WTC11 (cell line): ENCODE measurements at regions of chrX and their contacts with region 1.

Region 1: GRCh38 chrX:154370882-154371770 is 3.3 kb downstream of the FLNA start:
- DNase-seq: peak; percentile 89
- ATAC-seq: peak; percentile 40
- H3K4me3 Mint-ChIP-seq: peak overlapping the region; percentile 75
- H3K27ac Mint-ChIP-seq: 0 out of 2 replicates have a peak overlapping the region, but pooled peaks have one; percentile 45
- H3K4me1 Mint-ChIP-seq: peaks cover 11% of the 10 kb centered on the region
- H3K27me3 Mint-ChIP-seq: peaks cover 6% of the 10 kb centered on the region
- CTCF ChIP-seq: no peak

Region 2: DNA sequence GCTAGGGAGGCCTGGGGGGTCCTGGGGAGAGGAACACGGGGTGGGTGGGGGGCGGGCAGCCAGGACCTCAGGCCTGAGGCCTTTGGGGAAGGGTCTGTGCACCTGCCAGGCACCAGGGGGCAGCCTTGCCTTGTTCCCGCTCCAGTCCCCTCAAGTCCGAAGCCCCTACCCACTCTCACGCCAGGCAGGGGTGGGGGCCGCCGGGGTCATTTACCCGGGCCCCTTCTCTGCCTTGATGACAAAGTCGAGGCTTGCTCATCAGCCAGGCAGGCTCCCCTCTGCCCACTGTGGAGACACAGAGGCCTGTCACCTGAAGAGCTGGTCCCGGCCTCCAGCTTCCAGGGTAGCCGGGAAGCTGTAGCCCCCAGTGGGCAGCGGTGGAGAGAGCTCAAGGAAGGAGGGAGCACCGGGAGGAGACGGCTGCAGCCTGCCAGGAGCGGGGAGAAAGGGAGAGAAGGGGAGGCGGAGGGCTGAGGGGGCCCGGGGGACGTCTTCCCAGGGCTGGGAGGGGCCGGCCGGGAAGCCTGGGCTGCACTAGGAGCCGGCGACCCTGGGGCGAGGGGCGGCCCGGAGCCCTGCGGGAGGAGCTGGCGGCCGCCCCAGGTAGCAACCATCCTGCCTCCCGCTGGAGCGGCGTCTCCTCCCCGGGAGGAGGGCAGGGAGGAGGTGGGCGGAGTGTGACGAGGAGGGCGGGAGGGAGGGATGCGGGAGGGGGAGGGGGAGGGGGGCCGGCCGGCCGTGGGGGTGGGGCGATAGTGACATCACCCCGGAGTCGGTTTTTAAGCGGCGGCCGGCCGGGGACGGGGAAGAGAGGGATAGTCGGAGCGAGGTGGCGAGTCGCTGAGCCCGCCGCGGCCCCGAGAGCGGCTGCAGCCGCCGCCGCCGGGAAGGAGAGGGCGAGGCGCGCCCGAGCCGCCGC is 683.7 kb before region 1 on chrX and contains the start of gene SLC6A8:
- CTCF ChIA-PET with region 1: no interaction called
- POLR2A ChIA-PET with region 1: no interaction called
- DNase-seq: peak; percentile 65
- ATAC-seq: peak; percentile 38
- H3K4me3 Mint-ChIP-seq: peak within 1 kb of the TSS; percentile 61
- H3K27ac Mint-ChIP-seq: peak within 1 kb of the TSS; percentile 85
- H3K4me1 Mint-ChIP-seq: peaks cover 18% of the 10 kb centered on the region
- H3K27me3 Mint-ChIP-seq: no peaks in the 10 kb centered on the region; the same call in 1 of the 2 replicates
- CTCF ChIP-seq: peak; percentile 31; the same call in 1 of the 2 replicates
- total RNA-seq, gene SLC6A8: 102 to 112 TPM (median 110 TPM) in 3 replicates

Region 3: DNA sequence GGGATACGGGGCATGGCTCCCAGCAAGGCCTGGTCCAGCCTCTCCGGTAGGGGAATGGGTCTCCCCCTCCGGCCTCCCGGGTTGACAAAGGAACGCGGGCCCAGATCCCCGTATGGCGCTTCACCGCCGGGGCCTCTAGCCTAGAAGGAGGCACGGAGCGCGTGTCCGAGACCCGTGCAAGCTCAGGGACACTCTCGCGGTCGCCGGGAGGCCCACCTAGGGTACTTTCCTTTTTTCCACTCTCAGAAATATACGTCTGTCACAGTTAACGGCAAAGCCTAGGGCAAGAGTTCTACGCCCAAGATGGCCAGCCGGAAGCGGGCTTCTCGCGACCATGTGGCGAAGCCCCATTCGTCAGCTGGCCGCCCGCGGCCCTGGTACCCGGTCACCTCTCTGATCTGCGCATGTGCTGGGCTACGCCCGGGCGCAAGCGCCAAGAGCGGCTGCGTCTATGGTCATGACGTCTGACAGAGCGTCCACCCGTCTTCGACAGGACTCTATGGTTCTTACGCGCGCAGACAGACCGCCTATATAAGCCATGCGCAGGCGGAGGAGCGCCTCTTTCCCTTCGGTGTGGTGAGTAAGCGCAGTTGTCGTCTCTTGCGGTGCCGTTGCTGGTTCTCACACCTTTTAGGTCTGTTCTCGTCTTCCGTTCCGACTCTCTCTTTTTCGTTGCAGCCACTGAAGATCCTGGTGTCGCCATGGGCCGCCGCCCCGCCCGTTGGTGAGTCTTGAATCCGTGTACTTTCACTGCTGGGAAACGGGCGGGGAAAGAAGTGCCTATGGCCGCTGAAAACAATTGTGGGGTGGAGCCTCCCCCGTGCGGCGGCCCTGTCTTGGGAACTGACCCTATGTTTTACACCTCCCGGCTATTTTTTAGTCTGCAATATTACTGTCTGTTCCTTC is 26.9 kb after region 1 on chrX and contains the start of gene RPL10:
- CTCF ChIA-PET with region 1: interaction called, 4 read pairs
- POLR2A ChIA-PET with region 1: interaction called, 12 read pairs
- DNase-seq: peak; percentile 91
- ATAC-seq: peak; percentile 51
- H3K4me3 Mint-ChIP-seq: peak within 1 kb of the TSS; percentile 97
- H3K27ac Mint-ChIP-seq: peak within 1 kb of the TSS; percentile 99
- H3K4me1 Mint-ChIP-seq: peaks cover 16% of the 10 kb centered on the region
- H3K27me3 Mint-ChIP-seq: no peaks in the 10 kb centered on the region
- CTCF ChIP-seq: no peak
- total RNA-seq, gene RPL10: 2,241 to 2,474 TPM (median 2,438 TPM) in 3 replicates

Region 4: GRCh38 chrX:154428176-154429010 is 57.3 kb after region 1 on chrX and contains the start of gene ATP6AP1:
- CTCF ChIA-PET with region 1: interaction called, 11 read pairs
- POLR2A ChIA-PET with region 1: interaction called, 3 read pairs
- DNase-seq: peak; percentile 83
- ATAC-seq: peak; percentile 97
- H3K4me3 Mint-ChIP-seq: peak within 1 kb of the TSS; percentile 65
- H3K27ac Mint-ChIP-seq: no peak within 1 kb of the TSS
- H3K4me1 Mint-ChIP-seq: peaks cover 17% of the 10 kb centered on the region
- H3K27me3 Mint-ChIP-seq: no peaks in the 10 kb centered on the region
- CTCF ChIP-seq: no peak
- total RNA-seq, gene ATP6AP1: 43.9 to 46.0 TPM (median 44.8 TPM) in 3 replicates

Region 5: GRCh38 chrX:154490414-154491083 is 119.4 kb after region 1 on chrX and contains the start of gene SLC10A3:
- CTCF ChIA-PET with region 1: interaction called, 11 read pairs
- POLR2A ChIA-PET with region 1: interaction called, 7 read pairs
- DNase-seq: peak; percentile 91
- ATAC-seq: peak; percentile 92
- H3K4me3 Mint-ChIP-seq: peak within 1 kb of the TSS; percentile 80
- H3K27ac Mint-ChIP-seq: peak within 1 kb of the TSS; percentile 94
- H3K4me1 Mint-ChIP-seq: peaks cover 4% of the 10 kb centered on the region; the same call in 1 of the 2 replicates
- H3K27me3 Mint-ChIP-seq: peaks cover 5% of the 10 kb centered on the region; the same call in 1 of the 2 replicates
- CTCF ChIP-seq: no peak
- total RNA-seq, gene SLC10A3: 8.7 to 9.8 TPM (median 9.6 TPM) in 3 replicates

Region 6: DNA sequence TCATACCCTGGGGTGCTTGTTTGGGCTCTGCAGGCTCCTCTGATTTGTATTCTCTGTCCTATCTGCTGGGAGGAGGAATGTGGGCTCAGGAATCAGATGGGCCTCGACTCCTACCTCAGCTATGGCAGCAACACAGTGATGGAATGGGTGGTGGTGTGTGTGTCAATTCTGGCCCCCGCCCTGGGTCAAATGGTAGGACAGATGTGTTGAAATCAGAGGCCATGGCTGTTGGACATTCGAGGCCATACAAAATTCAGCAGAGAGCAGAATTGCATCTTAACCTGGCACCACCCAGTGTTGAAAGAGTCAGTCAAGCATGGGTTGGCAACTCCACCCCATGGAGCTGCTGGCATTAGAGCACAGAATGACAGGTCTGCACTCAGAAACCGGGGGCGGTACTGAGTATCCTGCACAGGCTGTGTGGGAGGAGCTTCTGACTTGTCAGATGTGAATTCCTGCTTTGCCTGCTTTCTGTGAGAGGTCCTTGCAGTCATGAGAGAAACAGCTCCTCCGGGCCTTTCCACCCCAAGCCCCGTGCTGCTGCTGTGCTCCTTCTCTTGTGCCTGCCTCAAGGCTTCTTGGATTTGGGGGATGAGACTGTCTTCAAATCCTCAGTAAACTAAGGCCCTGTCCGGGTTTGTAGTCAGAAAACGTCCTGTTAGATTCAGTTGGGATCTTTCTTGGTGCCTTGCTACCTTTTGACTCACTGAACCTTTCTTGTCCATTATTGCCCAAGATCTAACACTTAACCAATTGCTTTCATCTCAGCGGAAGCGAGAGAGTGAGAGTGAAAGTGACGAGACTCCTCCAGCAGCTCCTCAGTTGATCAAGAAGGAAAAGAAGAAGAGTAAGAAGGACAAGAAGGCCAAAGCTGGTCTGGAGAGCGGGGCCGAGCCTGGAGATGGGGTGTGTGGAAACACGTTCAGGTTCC is 404.6 kb after region 1 on chrX:
- CTCF ChIA-PET with region 1: no interaction called
- POLR2A ChIA-PET with region 1: no interaction called
- DNase-seq: no peak
- ATAC-seq: no peak; the same call in 1 of the 2 replicates
- H3K4me3 Mint-ChIP-seq: no peak overlapping the region
- H3K27ac Mint-ChIP-seq: no peak overlapping the region
- H3K4me1 Mint-ChIP-seq: peaks cover 3% of the 10 kb centered on the region; the same call in 1 of the 2 replicates
- H3K27me3 Mint-ChIP-seq: no peaks in the 10 kb centered on the region
- CTCF ChIP-seq: no peak